BJ (cell line): ENCODE measurements at regions of chr12 and their contacts with region 1.

Region 1: GRCh38 chr12:55940065-55940732 is 9.2 kb downstream of the DGKA start:
- DNase-seq: no peak
- H3K4me3 ChIP-seq: no peak overlapping the region
- H3K27me3 ChIP-seq: no peaks in the 10 kb centered on the region
- CTCF ChIP-seq: peak; percentile 95

Region 2: GRCh38 chr12:55817346-55818139 is 122.7 kb before region 1 on chr12 and contains the starts of genes ORMDL2 and SARNP:
- CTCF ChIA-PET with region 1: interaction called, 20 read pairs
- POLR2A ChIA-PET with region 1: interaction called, 6 read pairs
- DNase-seq: peak; percentile 99
- H3K4me3 ChIP-seq: peak within 1 kb of the TSS; percentile 92
- H3K27me3 ChIP-seq: no peaks in the 10 kb centered on the region
- CTCF ChIP-seq: no peak
- polyA plus RNA-seq, gene ORMDL2: 47.4 and 63.9 TPM in 2 replicates
- polyA plus RNA-seq, gene SARNP: 52.1 and 102 TPM in 2 replicates

Region 3: DNA sequence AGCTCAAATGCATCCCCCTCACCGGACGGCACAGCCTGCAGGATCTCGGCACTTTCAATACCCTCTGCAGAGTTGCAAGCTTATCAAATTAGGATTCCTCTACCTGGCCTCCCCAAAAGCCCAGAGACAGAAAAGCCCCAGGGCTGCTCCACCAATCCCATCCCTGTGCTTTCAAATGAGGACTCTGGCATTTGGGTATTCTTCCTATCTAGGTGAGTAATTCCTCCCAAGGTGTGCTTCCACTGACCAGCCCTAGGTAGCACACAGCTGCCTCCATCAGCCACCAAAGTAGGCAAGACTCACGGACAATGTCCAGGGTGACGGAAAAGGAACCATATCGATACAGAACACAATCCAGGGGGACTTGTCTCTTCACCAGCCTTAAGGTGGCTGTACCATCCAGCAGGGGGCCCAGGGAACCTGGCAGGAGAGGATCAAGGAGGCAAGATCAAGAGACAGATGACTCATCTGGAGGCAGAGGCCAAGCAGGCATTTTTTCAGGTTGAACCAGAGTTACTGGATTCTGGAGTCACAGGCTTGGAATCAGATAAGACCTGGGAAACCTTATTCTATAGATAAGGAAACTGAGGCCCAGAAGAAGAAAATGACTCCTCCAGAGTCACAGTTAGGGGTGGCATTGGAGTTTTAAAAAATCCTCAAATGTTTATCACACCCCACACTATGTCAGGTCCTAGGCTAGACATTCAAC is 15.8 kb after region 1 on chr12:
- CTCF ChIA-PET with region 1: interaction called, 10 read pairs
- POLR2A ChIA-PET with region 1: no interaction called
- DNase-seq: no peak
- H3K4me3 ChIP-seq: no peak overlapping the region
- H3K27me3 ChIP-seq: no peaks in the 10 kb centered on the region
- CTCF ChIP-seq: peak; percentile 49